GM12878 (cell line): ENCODE measurements at regions of chr6 and their contacts with region 1.

Region 1: GRCh38 chr6:111210194-111210728 is 123.0 kb downstream of the SLC16A10 start:
- DNase-seq: peak; percentile 30
- ATAC-seq: peak; percentile 92
- H3K4me3 ChIP-seq: no peak overlapping the region
- H3K27ac ChIP-seq: no peak overlapping the region
- H3K4me1 ChIP-seq: no peaks in the 10 kb centered on the region
- H3K27me3 ChIP-seq: no peaks in the 10 kb centered on the region; a peak in 1 of 4 replicates
- CTCF ChIP-seq: peak; percentile 65 to 78 (median 76)
- EP300 ChIP-seq: no peak
- POLR2A ChIP-seq: no peak
- RAD21 ChIP-seq: peak; percentile 91

Region 2: DNA sequence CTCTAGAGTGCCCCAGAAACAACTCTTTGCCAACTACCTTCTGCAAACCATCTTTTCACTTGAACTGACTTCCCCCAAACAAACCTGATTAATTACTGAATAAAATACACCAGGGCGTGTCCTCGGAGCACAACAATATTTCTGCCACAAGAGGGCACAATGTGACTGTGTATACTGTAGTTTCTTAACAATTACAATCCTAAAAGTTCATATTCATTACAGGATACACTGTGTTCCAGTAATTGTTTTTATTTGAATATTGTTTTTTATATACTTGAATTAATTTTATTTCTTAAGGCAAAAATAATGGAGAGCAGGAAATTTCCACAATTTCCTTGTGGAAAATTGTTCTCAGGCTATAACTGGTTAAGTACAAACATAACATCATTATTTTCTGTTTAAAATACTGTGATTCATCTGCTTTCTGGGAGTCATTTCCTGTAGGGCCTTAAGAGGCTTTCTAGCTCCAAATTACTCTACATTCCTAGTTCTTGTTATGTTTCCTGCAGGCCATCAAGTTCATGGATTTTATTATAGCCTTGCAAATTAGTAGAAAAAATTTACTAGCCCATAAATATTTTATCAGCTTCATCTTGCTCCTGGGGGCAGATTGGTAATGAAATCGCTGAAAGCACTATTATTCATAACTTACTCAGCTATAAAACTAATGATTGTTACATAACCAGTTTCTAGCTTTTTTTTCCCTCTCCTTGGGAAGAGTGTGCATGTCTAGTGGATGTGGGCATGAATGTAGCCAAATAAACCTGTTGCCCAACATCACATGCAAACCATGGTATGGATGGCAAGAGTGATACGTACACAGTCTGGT is 681.9 kb before region 1 on chr6:
- CTCF ChIA-PET with region 1: no interaction called
- POLR2A ChIA-PET with region 1: no interaction called
- RAD21 ChIA-PET with region 1: no interaction called
- SMC1A ChIA-PET with region 1: no interaction called
- in situ Hi-C with region 1: loop called (anchors 5 kb)
- intact Hi-C with region 1: loop called (anchors 1 kb)
- DNase-seq: peak; percentile 28
- ATAC-seq: peak; percentile 89
- H3K4me3 ChIP-seq: no peak overlapping the region
- H3K27ac ChIP-seq: no peak overlapping the region
- H3K4me1 ChIP-seq: no peaks in the 10 kb centered on the region
- H3K27me3 ChIP-seq: peaks cover 0 to 1% of the 10 kb centered on the region in 2 experiments; a peak in 2 of 4 replicates
- CTCF ChIP-seq: peak; percentile 47 to 88 (median 73); a peak in 5 of 6 replicates
- EP300 ChIP-seq: no peak
- POLR2A ChIP-seq: no peak
- RAD21 ChIP-seq: peak; percentile 93

Region 3: GRCh38 chr6:111011360-111012142 is 198.7 kb before region 1 on chr6:
- CTCF ChIA-PET with region 1: interaction called, 63 read pairs
- POLR2A ChIA-PET with region 1: no interaction called
- RAD21 ChIA-PET with region 1: interaction called, 35 read pairs
- SMC1A ChIA-PET with region 1: interaction called, 24 read pairs
- in situ Hi-C with region 1: loop called (anchors 5 kb)
- intact Hi-C with region 1: loop called (anchors 1 kb)
- DNase-seq: peak; percentile 15
- ATAC-seq: peak; percentile 90
- H3K4me3 ChIP-seq: no peak overlapping the region
- H3K27ac ChIP-seq: no peak overlapping the region
- H3K4me1 ChIP-seq: no peaks in the 10 kb centered on the region
- H3K27me3 ChIP-seq: no peaks in the 10 kb centered on the region
- CTCF ChIP-seq: peak; percentile 51 to 75 (median 53); a peak in 5 of 6 replicates
- EP300 ChIP-seq: no peak
- POLR2A ChIP-seq: no peak
- RAD21 ChIP-seq: peak; percentile 93

Region 4: DNA sequence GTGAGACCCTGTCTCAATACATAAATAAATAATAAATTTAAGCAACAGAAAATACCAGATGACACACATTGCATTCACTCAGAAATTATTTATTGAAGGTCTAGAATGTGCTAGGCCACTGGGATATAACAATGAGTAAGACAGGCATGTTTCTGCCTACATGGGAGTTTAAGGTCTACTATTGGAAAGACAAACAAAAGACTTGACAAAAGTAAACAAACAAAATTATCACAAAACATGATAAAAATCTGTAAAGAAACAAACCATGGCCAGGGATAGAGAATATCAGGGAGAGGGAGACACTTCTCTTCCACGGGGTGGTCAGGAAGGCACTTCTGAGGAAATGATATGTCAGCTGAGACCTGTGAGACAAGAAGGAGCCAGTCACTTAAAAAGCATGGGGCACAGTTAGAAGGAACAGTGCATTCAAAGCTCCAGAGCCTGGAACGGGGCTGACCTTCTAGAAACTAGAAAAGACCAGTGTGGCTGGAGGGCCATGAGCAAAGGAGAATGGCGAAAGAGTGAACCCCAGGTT is 158.2 kb before region 1 on chr6:
- CTCF ChIA-PET with region 1: interaction called, 85 read pairs
- POLR2A ChIA-PET with region 1: no interaction called
- RAD21 ChIA-PET with region 1: interaction called, 42 read pairs
- SMC1A ChIA-PET with region 1: interaction called, 33 read pairs
- in situ Hi-C with region 1: loop called (anchors 5 kb)
- intact Hi-C with region 1: loop called (anchors 1 kb)
- DNase-seq: no peak
- ATAC-seq: no peak
- H3K4me3 ChIP-seq: no peak overlapping the region
- H3K27ac ChIP-seq: no peak overlapping the region
- H3K4me1 ChIP-seq: peaks cover 6% of the 10 kb centered on the region; the same call in 1 of the 2 replicates
- H3K27me3 ChIP-seq: no peaks in the 10 kb centered on the region
- CTCF ChIP-seq: no peak
- EP300 ChIP-seq: no peak
- POLR2A ChIP-seq: no peak
- RAD21 ChIP-seq: no peak

Region 5: GRCh38 chr6:111057074-111057752 is 153.0 kb before region 1 on chr6:
- CTCF ChIA-PET with region 1: interaction called, 85 read pairs
- POLR2A ChIA-PET with region 1: no interaction called
- RAD21 ChIA-PET with region 1: interaction called, 42 read pairs
- SMC1A ChIA-PET with region 1: interaction called, 33 read pairs
- in situ Hi-C with region 1: loop called (anchors 5 kb)
- intact Hi-C with region 1: loop called (anchors 1 kb)
- DNase-seq: no peak
- ATAC-seq: peak; percentile 96
- H3K4me3 ChIP-seq: no peak overlapping the region
- H3K27ac ChIP-seq: no peak overlapping the region
- H3K4me1 ChIP-seq: no peaks in the 10 kb centered on the region
- H3K27me3 ChIP-seq: no peaks in the 10 kb centered on the region
- CTCF ChIP-seq: peak; percentile 73 to 90 (median 86)
- EP300 ChIP-seq: no peak
- POLR2A ChIP-seq: no peak
- RAD21 ChIP-seq: peak; percentile 79

Region 6: GRCh38 chr6:111162504-111162903 is 47.8 kb before region 1 on chr6:
- CTCF ChIA-PET with region 1: no interaction called
- POLR2A ChIA-PET with region 1: no interaction called
- RAD21 ChIA-PET with region 1: no interaction called
- SMC1A ChIA-PET with region 1: no interaction called
- in situ Hi-C with region 1: no loop called
- intact Hi-C with region 1: no loop called
- DNase-seq: no peak
- ATAC-seq: no peak
- H3K4me3 ChIP-seq: no peak overlapping the region
- H3K27ac ChIP-seq: no peak overlapping the region
- H3K4me1 ChIP-seq: peaks cover under 1% of the 10 kb centered on the region; the same call in 1 of the 2 replicates
- H3K27me3 ChIP-seq: no peaks in the 10 kb centered on the region
- CTCF ChIP-seq: no peak
- EP300 ChIP-seq: no peak
- POLR2A ChIP-seq: no peak
- RAD21 ChIP-seq: no peak

Region 7: GRCh38 chr6:111220383-111221031 is 10.2 kb after region 1 on chr6:
- CTCF ChIA-PET with region 1: interaction called, 16 read pairs
- POLR2A ChIA-PET with region 1: no interaction called
- RAD21 ChIA-PET with region 1: interaction called, 3 read pairs
- SMC1A ChIA-PET with region 1: interaction called, 5 read pairs
- in situ Hi-C with region 1: no loop called
- intact Hi-C with region 1: no loop called
- DNase-seq: no peak
- ATAC-seq: no peak
- H3K4me3 ChIP-seq: no peak overlapping the region
- H3K27ac ChIP-seq: no peak overlapping the region
- H3K4me1 ChIP-seq: peaks cover 4% of the 10 kb centered on the region; the same call in 1 of the 2 replicates
- H3K27me3 ChIP-seq: peaks cover 0 to 2% of the 10 kb centered on the region in 2 experiments; a peak in 1 of 4 replicates
- CTCF ChIP-seq: no peak
- EP300 ChIP-seq: no peak
- POLR2A ChIP-seq: no peak
- RAD21 ChIP-seq: no peak

Region 8: DNA sequence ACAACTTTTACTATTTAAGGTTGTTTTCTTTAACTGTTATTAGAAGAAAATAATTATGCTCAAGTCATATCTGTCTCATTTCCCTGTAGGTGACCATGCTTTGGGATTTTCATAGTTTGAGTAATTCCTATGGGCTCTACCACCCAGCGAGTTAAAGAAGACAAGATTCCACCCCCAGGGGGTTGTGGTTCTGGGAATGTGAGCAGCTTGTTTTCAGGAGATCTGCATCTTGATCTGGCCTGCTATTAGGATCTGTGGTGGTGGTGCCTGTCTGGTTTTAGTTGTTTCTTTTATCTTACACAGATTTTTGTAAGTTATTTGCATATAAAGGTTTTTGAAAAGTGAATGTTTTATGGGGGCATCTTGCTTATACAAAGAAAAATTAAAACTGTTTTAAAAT is 292.9 kb after region 1 on chr6:
- CTCF ChIA-PET with region 1: no interaction called
- POLR2A ChIA-PET with region 1: no interaction called
- RAD21 ChIA-PET with region 1: no interaction called
- SMC1A ChIA-PET with region 1: no interaction called
- in situ Hi-C with region 1: no loop called
- intact Hi-C with region 1: no loop called
- DNase-seq: no peak
- ATAC-seq: no peak
- H3K4me3 ChIP-seq: no peak overlapping the region
- H3K27ac ChIP-seq: no peak overlapping the region
- H3K4me1 ChIP-seq: no peaks in the 10 kb centered on the region
- H3K27me3 ChIP-seq: no peaks in the 10 kb centered on the region
- CTCF ChIP-seq: no peak
- EP300 ChIP-seq: no peak
- POLR2A ChIP-seq: no peak
- RAD21 ChIP-seq: no peak